ENCODE measurements at regions of chr6 and their contacts with region 1.

Region 1: GRCh38 chr6:41779793-41780545 is at the start of gene FRS3:
- DNase-seq: peak; percentile 96 to 100 (median 99)
- ATAC-seq: peak; percentile 97
- H3K4me3 ChIP-seq: peak within 1 kb of the TSS; percentile 73 to 93
- H3K4me3 Mint-ChIP-seq: peak within 1 kb of the TSS; percentile 93
- H3K27ac ChIP-seq: peak within 1 kb of the TSS in 1 of 2 experiments; percentile 23
- H3K27ac Mint-ChIP-seq: no peak within 1 kb of the TSS
- H3K4me1 ChIP-seq: peaks cover 18% of the 10 kb centered on the region
- H3K4me1 Mint-ChIP-seq: peaks cover 21% of the 10 kb centered on the region
- H3K27me3 ChIP-seq: no peaks in the 10 kb centered on the region
- H3K27me3 Mint-ChIP-seq: peaks cover 4% of the 10 kb centered on the region
- CTCF ChIP-seq: peak; percentile 74
- total RNA-seq, gene FRS3: 3.7 to 6.2 TPM

Region 2: GRCh38 chr6:41581381-41581991 is 198.5 kb before region 1 on chr6:
- CTCF ChIA-PET with region 1: no interaction called
- POLR2A ChIA-PET with region 1: no interaction called
- intact Hi-C with region 1: no loop called
- DNase-seq: no peak
- ATAC-seq: no peak
- H3K4me3 ChIP-seq: no peak overlapping the region
- H3K4me3 Mint-ChIP-seq: no peak overlapping the region
- H3K27ac ChIP-seq: no peak overlapping the region
- H3K27ac Mint-ChIP-seq: no peak overlapping the region
- H3K4me1 ChIP-seq: no peaks in the 10 kb centered on the region
- H3K4me1 Mint-ChIP-seq: peaks cover 6% of the 10 kb centered on the region
- H3K27me3 ChIP-seq: no peaks in the 10 kb centered on the region
- H3K27me3 Mint-ChIP-seq: no peaks in the 10 kb centered on the region
- CTCF ChIP-seq: no peak

Region 3: GRCh38 chr6:41602864-41603608 is 176.9 kb before region 1 on chr6:
- CTCF ChIA-PET with region 1: interaction called, 5 read pairs
- POLR2A ChIA-PET with region 1: no interaction called
- intact Hi-C with region 1: loop called in 1 of 2 experiments (anchors 5 kb)
- DNase-seq: peak; percentile 45 to 87 (median 74)
- ATAC-seq: peak; percentile 81
- H3K4me3 ChIP-seq: no peak overlapping the region
- H3K4me3 Mint-ChIP-seq: no peak overlapping the region
- H3K27ac ChIP-seq: no peak overlapping the region
- H3K27ac Mint-ChIP-seq: no peak overlapping the region
- H3K4me1 ChIP-seq: no peaks in the 10 kb centered on the region
- H3K4me1 Mint-ChIP-seq: peaks cover 5% of the 10 kb centered on the region
- H3K27me3 ChIP-seq: peaks cover 0 to 4% of the 10 kb centered on the region in 2 experiments
- H3K27me3 Mint-ChIP-seq: peaks cover 12% of the 10 kb centered on the region
- CTCF ChIP-seq: peak; percentile 62

Region 4: GRCh38 chr6:41625442-41625841 is 154.5 kb before region 1 on chr6:
- CTCF ChIA-PET with region 1: no interaction called
- POLR2A ChIA-PET with region 1: no interaction called
- intact Hi-C with region 1: no loop called
- DNase-seq: peak in 3 of 9 experiments; percentile 16 to 54 (median 28)
- ATAC-seq: no peak
- H3K4me3 ChIP-seq: no peak overlapping the region
- H3K4me3 Mint-ChIP-seq: no peak overlapping the region
- H3K27ac ChIP-seq: no peak overlapping the region
- H3K27ac Mint-ChIP-seq: no peak overlapping the region
- H3K4me1 ChIP-seq: peaks cover 13% of the 10 kb centered on the region
- H3K4me1 Mint-ChIP-seq: peaks cover 10% of the 10 kb centered on the region
- H3K27me3 ChIP-seq: no peaks in the 10 kb centered on the region
- H3K27me3 Mint-ChIP-seq: peaks cover 9% of the 10 kb centered on the region
- CTCF ChIP-seq: no peak

Region 5: DNA sequence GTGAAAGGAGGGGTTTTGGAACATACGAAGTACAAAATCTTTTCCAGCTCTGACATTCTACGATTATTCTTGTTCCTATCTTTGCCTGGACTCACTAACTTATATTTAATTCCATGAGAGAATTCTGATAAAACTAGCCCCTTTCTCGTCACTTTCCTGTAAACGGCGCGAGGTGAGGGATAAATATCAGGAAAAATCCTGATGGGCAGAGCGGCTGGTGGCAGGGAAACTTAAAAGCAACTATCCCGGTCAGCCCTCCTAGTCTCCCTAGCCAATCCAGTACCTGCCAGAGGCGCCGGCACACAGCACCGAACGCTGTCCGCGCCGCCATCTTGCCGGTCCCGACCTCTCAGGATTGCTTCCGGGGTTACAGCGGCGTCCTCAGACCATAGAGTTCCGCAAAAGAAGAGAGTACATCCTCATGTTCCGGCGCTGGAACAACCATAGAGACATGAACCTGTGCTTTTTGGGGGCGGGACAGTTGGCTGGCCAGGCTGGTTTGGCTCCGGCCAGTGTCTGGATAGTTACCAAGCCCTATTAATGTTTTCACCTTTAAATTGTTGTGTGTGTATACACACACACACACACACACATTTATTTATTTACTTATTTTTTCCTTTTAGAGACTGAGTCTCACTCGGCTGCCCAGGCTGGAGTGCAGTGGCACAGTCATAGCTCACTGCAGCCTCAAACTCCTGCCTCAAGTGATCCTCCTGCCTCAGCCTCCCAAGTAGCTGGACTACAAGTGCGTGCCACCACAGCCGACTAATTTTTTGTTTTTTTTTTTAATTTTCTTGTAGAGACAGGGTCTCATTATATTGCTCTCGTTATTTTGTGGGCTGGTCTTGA is 437.8 kb after region 1 on chr6 and contains the start of gene MRPS10:
- CTCF ChIA-PET with region 1: interaction called, 5 read pairs
- POLR2A ChIA-PET with region 1: no interaction called
- intact Hi-C with region 1: loop called (anchors 1 kb)
- DNase-seq: peak; percentile 81 to 95 (median 91)
- ATAC-seq: peak; percentile 99
- H3K4me3 ChIP-seq: peak within 1 kb of the TSS; percentile 70 to 93
- H3K4me3 Mint-ChIP-seq: peak within 1 kb of the TSS; percentile 99
- H3K27ac ChIP-seq: peak within 1 kb of the TSS; percentile 63 to 74
- H3K27ac Mint-ChIP-seq: peak within 1 kb of the TSS; percentile 97
- H3K4me1 ChIP-seq: peaks cover 8% of the 10 kb centered on the region
- H3K4me1 Mint-ChIP-seq: peaks cover 25% of the 10 kb centered on the region
- H3K27me3 ChIP-seq: no peaks in the 10 kb centered on the region
- H3K27me3 Mint-ChIP-seq: no peaks in the 10 kb centered on the region
- CTCF ChIP-seq: no peak
- total RNA-seq, gene MRPS10: 17.0 to 17.4 TPM

Region 6: GRCh38 chr6:42230345-42231321 is 450.7 kb after region 1 on chr6:
- CTCF ChIA-PET with region 1: no interaction called
- POLR2A ChIA-PET with region 1: no interaction called
- intact Hi-C with region 1: loop called in 1 of 2 experiments (anchors 5 kb)
- DNase-seq: no peak
- ATAC-seq: no peak
- H3K4me3 ChIP-seq: no peak overlapping the region
- H3K4me3 Mint-ChIP-seq: no peak overlapping the region
- H3K27ac ChIP-seq: no peak overlapping the region
- H3K27ac Mint-ChIP-seq: peak overlapping the region; percentile 55
- H3K4me1 ChIP-seq: no peaks in the 10 kb centered on the region
- H3K4me1 Mint-ChIP-seq: no peaks in the 10 kb centered on the region
- H3K27me3 ChIP-seq: no peaks in the 10 kb centered on the region
- H3K27me3 Mint-ChIP-seq: no peaks in the 10 kb centered on the region
- CTCF ChIP-seq: no peak